ENCODE measurements at regions of chr17 and their contacts with region 1.

Region 1: DNA sequence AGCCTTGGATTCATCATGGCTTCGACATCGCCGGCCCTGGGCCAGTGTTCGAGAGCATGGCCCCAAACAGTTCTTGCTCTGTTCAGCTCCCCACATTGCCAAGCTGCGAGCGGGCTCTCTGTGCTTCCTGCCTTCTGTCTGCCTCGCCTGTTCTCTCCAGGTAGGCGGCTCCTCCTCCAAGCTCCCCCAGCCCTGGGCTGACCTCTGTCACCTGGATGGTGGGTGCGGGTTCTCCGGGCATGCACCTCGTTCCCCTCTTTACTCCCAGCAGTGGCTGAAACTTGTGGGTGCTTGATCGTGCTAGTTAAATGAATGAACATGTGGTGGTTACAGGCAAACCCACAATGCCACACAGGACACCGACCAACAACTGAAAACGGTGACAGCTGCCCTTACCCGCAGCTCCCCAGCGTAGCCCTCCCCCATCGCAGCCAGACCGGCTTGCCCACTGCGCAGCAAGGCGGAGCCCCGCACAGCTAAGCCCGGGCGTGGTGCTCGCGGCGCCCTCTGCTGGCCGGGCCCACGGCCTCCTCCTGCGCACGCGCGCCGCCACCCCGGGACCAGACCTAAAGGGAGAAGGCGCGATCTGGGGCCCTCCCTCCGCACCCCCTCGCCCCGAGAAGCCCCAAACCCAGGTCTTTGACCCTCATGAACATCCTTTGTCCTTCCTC is 23.0 kb upstream of the EIF1 start:
- DNase-seq: peak; percentile 90
- ATAC-seq: peak; percentile 82
- H3K4me3 Mint-ChIP-seq: peak overlapping the region; percentile 85
- H3K27ac Mint-ChIP-seq: peak overlapping the region; percentile 94
- H3K4me1 Mint-ChIP-seq: peaks cover 16% of the 10 kb centered on the region
- H3K27me3 Mint-ChIP-seq: peaks cover 17% of the 10 kb centered on the region
- CTCF ChIP-seq: peak; percentile 71

Region 2: DNA sequence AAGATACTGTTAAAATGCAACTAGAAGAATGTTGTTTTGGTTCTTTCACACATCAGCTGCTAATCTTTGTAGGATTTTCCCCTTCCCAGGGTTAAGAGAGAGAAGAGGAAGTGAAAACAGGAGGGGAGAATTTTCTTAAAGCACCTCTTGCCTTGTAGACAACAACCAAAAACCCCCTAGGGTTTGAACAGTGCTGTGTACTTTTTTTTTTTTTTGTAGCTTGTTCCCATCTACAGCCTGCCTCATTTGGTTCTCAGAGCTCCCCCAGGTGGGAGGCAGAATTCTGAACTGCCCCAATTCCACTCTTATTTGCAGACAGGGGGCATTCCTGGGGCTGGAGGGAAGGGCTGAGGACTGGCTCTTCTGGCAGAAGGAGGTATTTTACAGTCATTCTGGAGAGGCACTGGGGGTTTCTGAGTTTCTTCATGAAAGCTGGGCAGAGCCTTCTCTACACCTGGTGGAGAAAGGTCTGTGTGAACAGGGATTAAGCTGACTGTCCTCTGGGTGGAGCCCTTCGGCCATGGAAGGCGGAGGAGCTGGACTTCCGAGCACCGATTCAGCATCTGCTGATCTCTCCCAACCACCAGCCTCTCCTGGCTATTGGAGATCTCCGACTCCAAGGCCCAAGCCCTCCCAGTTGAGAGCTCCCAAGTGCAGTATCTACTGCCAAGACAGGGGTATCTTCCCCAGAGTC is 1050.3 kb before region 1 on chr17:
- CTCF ChIA-PET with region 1: interaction called, 10 read pairs
- POLR2A ChIA-PET with region 1: interaction called, 3 read pairs
- DNase-seq: peak; percentile 73
- ATAC-seq: peak; percentile 82
- H3K4me3 Mint-ChIP-seq: no peak overlapping the region
- H3K27ac Mint-ChIP-seq: no peak overlapping the region
- H3K4me1 Mint-ChIP-seq: peaks cover 5% of the 10 kb centered on the region
- H3K27me3 Mint-ChIP-seq: peaks cover 6% of the 10 kb centered on the region; the same call in 1 of the 2 replicates
- CTCF ChIP-seq: no peak

Region 3: DNA sequence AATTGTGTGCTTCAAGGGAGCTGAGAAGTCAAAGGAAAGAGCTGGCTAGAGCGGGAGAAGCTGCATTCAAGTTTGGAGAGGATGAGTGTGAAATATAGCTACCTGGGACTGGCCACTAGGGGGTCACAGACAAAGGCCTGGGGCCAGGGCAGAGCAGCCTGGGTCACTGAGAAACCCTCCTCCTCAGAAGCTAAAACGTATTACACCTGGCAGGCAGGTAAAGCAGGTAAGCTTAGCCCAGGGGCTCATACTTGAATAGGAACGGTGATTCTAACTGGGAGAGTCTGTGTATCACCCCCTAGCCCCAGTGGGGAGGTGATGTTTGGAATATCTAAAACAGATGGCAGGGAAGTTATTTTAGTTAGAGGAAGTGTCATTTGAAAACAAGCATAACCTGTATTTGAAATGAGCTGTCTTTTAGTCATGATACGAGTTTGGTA is 248.1 kb before region 1 on chr17:
- CTCF ChIA-PET with region 1: interaction called, 19 read pairs
- POLR2A ChIA-PET with region 1: no interaction called
- DNase-seq: peak; percentile 59
- ATAC-seq: peak; percentile 96
- H3K4me3 Mint-ChIP-seq: no peak overlapping the region
- H3K27ac Mint-ChIP-seq: no peak overlapping the region
- H3K4me1 Mint-ChIP-seq: peaks cover 17% of the 10 kb centered on the region
- H3K27me3 Mint-ChIP-seq: no peaks in the 10 kb centered on the region
- CTCF ChIP-seq: peak; percentile 65

Region 4: DNA sequence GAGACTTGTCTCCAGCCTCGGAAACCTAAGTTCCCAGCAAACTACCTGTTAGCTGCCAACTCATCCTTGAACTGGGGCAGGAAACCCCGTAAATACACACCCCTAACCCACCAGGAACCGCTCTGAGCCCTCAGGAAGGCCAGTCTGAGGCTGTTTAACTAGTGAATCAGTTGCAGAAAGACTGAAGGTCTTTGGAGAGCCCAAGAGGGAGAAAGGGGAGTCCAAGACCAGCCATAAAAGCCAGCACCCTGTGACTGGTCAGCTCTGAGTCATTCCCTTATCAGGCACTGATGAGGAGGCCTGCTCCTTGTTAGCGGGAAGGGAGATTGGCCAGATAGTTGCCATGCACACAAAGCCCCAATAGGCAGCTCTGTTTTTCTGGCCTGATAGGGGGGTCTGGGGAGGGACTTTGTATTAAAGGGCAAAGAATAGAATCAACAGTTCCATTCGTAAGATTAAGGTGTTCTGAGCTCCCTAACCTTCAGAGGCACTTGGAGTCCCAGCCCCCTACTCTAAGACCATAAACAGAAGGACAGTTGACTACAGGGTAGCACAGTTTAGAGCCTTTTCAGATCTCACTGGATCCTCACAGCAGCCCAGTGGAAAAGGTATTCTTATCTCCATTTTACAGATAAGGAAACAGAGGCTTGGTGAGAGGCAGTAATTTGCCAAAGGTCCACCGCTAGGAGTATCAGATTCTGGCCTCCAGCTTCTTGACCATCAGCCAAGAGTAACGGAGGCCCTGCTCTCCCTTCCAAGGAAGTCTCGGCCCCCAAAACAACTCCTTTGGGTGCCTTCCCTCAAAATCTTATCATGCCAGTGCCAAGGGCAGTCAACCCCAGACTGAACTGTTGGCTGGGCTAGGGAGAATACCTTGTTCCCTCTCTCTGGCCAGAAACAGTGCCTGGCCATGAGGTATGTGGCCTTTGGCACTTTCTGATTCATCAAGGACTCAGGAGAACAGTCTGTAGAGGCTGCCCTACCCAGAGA is 135.3 kb before region 1 on chr17:
- CTCF ChIA-PET with region 1: interaction called, 26 read pairs
- POLR2A ChIA-PET with region 1: interaction called, 4 read pairs
- DNase-seq: no peak
- ATAC-seq: no peak
- H3K4me3 Mint-ChIP-seq: no peak overlapping the region
- H3K27ac Mint-ChIP-seq: no peak overlapping the region
- H3K4me1 Mint-ChIP-seq: peaks cover 41% of the 10 kb centered on the region
- H3K27me3 Mint-ChIP-seq: peaks cover 6% of the 10 kb centered on the region
- CTCF ChIP-seq: no peak

Region 5: DNA sequence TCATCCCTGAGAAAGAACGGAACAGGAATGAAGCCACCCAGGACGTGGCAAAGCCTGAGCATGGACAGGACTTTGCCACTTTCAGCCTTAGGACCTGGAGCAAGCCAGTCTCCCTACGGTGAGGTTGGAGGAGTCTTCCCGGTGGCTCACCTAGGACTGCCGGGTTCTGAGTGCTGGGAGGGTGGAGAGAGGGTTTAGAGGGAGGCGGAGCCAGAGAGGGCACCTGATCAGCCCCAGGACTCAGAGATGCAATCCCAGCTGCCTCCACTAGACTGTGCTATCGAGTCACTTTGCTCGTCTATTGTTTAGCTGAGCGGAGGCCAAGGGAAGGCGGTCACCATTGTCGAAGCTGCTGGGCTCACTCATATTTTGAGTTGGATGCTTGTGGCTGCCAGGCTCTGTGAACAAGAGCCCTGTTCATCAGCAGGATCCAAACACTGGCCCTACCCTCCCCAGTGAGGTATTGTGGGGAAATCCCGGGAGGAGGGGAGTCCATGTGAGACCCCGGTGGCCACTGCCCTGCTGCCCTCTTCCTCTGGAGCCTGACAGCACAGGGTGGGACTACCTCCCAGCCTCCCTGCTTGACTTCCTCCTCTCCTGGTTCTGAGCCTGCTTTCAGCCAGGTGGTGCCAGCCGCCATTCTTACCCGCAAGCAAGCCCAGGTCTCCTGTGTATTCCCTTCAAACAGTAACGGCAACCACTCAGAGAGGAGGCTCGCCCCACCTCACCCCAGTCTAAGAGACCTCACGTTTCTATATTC is 86.0 kb before region 1 on chr17:
- CTCF ChIA-PET with region 1: interaction called, 27 read pairs
- POLR2A ChIA-PET with region 1: no interaction called
- DNase-seq: peak; percentile 97
- ATAC-seq: peak; percentile 99
- H3K4me3 Mint-ChIP-seq: no peak overlapping the region
- H3K27ac Mint-ChIP-seq: no peak overlapping the region
- H3K4me1 Mint-ChIP-seq: peaks cover 11% of the 10 kb centered on the region
- H3K27me3 Mint-ChIP-seq: peaks cover 29% of the 10 kb centered on the region
- CTCF ChIP-seq: peak; percentile 84

Region 6: GRCh38 chr17:41624208-41625101 is 41.2 kb before region 1 on chr17 and contains the start of gene KRT17:
- CTCF ChIA-PET with region 1: interaction called, 17 read pairs
- POLR2A ChIA-PET with region 1: no interaction called
- DNase-seq: no peak
- ATAC-seq: peak; percentile 60
- H3K4me3 Mint-ChIP-seq: no peak within 1 kb of the TSS
- H3K27ac Mint-ChIP-seq: no peak within 1 kb of the TSS
- H3K4me1 Mint-ChIP-seq: peaks cover 14% of the 10 kb centered on the region
- H3K27me3 Mint-ChIP-seq: no peaks in the 10 kb centered on the region
- CTCF ChIP-seq: no peak
- total RNA-seq, gene KRT17: 0.53 to 1.5 TPM (median 0.92 TPM) in 3 replicates

Region 7: DNA sequence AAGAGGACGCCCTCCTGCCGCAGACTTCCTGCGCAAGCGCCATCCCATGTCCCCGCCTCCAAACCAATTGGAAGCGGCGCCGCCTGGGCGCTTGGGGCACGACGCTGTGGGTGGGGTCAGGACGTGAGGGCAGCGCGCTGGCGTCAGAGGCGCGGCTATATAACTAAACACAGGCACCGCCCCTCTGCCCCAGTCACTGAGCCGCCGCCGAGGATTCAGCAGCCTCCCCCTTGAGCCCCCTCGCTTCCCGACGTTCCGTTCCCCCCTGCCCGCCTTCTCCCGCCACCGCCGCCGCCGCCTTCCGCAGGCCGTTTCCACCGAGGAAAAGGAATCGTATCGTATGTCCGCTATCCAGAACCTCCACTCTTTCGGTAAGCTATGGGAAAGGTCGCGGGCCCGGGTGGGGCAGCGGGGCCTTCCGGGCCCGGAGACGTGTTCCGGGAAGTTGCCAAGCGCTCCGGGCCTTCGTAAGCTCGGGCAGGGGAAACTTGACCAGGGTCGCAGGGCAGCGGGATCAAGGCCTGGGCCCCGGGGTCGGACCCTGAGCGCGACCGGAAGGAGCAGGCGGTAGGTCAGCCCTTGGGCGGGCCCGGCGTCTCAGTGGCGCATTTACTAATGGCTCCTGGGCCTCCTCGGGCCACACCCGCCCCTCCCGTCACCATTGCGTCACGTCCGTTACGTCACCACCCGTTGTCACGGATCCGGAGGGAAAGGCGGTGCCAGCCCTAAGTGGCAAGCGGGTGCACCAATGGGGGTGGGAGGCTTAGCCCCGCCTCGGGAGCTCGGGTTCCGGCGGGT is 23.2 kb after region 1 on chr17 and contains the start of gene EIF1:
- CTCF ChIA-PET with region 1: interaction called, 44 read pairs
- POLR2A ChIA-PET with region 1: interaction called, 38 read pairs
- DNase-seq: peak; percentile 100
- ATAC-seq: peak; percentile 86
- H3K4me3 Mint-ChIP-seq: peak within 1 kb of the TSS; percentile 92
- H3K27ac Mint-ChIP-seq: peak within 1 kb of the TSS; percentile 99
- H3K4me1 Mint-ChIP-seq: peaks cover 15% of the 10 kb centered on the region
- H3K27me3 Mint-ChIP-seq: peaks cover 9% of the 10 kb centered on the region
- CTCF ChIP-seq: no peak
- total RNA-seq, gene EIF1: 466 to 481 TPM (median 475 TPM) in 3 replicates

Measured in WTC11 (cell line).